Dorsolateral prefrontal cortex (tissue), 120 donors: ENCODE measurements at regions of chr2 and their contacts with region 1.

Region 1: GRCh38 chr2:107936433-107937359 is 49.6 kb upstream of the SLC5A7 start:
- DNase-seq: no peak
- H3K4me3 ChIP-seq: no peak overlapping the region
- H3K27ac ChIP-seq: no peak overlapping the region
- H3K27me3 ChIP-seq: no peaks in the 10 kb centered on the region
- CTCF ChIP-seq: peak; percentile 53 to 85 (median 71)

Region 2: GRCh38 chr2:107062173-107062572 is 874.5 kb before region 1 on chr2:
- intact Hi-C with region 1: no loop called
- DNase-seq: no peak
- H3K4me3 ChIP-seq: no peak overlapping the region
- H3K27ac ChIP-seq: no peak overlapping the region
- H3K27me3 ChIP-seq: no peaks in the 10 kb centered on the region
- CTCF ChIP-seq: no peak

Region 3: DNA sequence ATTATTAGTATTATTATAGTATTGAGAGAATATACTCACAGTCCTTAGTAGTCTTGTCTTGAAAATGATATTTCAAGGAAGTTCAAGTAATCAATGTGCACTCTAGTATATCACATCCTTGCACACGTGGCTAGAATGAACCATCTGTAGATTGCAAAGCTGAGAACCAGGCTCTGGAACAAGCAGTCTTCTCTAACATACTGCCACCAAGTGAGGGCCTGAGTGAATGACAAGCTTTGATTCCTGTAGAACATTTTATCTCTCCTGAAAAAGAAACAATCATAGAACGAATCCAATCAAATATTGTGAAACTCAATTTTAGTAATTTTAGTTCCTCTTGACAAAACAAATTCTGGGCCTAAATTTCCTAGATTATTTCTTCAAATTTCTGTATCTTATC is 247.7 kb after region 1 on chr2:
- intact Hi-C with region 1: loop called in 1 of 2 experiments (anchors 10 kb)
- DNase-seq: no peak
- H3K4me3 ChIP-seq: no peak overlapping the region
- H3K27ac ChIP-seq: no peak overlapping the region
- H3K27me3 ChIP-seq: peaks cover 0 to 4% (median 0%) of the 10 kb centered on the region in 45 donors
- CTCF ChIP-seq: peak in 36 of 56 donors; percentile 13 to 56 (median 28)

Region 4: DNA sequence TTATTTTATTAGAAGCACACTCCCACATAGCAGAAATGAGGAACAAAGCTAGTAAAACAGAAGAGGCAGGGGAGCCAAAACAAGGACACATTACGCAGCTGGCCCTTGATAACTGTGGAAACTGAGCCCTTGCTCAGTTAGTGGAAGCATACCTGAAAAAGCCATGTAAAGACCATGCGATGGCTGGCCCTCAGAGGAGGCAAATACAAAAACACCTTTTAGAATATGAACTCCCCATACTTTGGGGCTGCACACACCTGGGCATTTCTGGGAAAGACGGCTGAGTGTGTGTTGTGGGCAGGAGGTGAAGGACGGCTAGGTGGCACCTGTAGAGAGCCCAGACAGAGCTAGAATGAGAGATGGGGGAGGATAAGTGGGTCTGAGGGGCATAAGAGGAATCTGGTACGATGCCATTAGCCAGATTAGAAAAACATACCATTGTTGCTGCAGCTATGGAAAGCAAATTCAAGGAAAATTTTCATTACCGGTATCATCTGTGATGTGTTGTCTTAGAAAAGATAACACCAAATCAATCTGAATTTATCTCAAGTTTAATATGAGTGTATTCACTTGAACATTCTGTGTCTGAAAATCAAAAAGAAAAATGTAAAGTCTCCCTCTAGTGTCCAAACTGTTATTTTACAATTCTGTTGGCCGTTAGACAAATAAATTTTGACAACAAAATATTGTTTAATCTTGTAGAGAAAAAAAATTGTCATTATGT is 257.9 kb after region 1 on chr2:
- intact Hi-C with region 1: loop called (anchors 10 kb)
- DNase-seq: no peak
- H3K4me3 ChIP-seq: no peak overlapping the region
- H3K27ac ChIP-seq: no peak overlapping the region
- H3K27me3 ChIP-seq: no peaks in the 10 kb centered on the region
- CTCF ChIP-seq: peak in 55 of 56 donors; percentile 31 to 75 (median 58)